Ovary (tissue), 10 donors: ENCODE measurements at regions of chr3 and their contacts with region 1.

Region 1: GRCh38 chr3:31768479-31769123 is 212.5 kb downstream of the OSBPL10 start:
- DNase-seq: peak; percentile 62 to 80 (median 65)
- H3K4me3 ChIP-seq: no peak overlapping the region
- H3K27ac ChIP-seq: no peak overlapping the region
- H3K4me1 ChIP-seq: peaks cover 3% of the 10 kb centered on the region
- H3K27me3 ChIP-seq: no peaks in the 10 kb centered on the region
- CTCF ChIP-seq: peak; percentile 52 to 62 (median 61)
- EP300 ChIP-seq: no peak
- POLR2A ChIP-seq: no peak

Region 2: GRCh38 chr3:30768703-30769685 is 999.6 kb before region 1 on chr3:
- intact Hi-C with region 1: loop called in 3 of 4 experiments (anchors 5 to 10 kb)
- DNase-seq: peak; percentile 40 to 78 (median 72)
- H3K4me3 ChIP-seq: no peak overlapping the region
- H3K27ac ChIP-seq: no peak overlapping the region
- H3K4me1 ChIP-seq: no peaks in the 10 kb centered on the region
- H3K27me3 ChIP-seq: no peaks in the 10 kb centered on the region
- CTCF ChIP-seq: peak; percentile 37 to 63 (median 56)
- EP300 ChIP-seq: no peak
- POLR2A ChIP-seq: no peak

Region 3: GRCh38 chr3:30779686-30780287 is 988.8 kb before region 1 on chr3:
- intact Hi-C with region 1: loop called in 2 of 4 experiments (anchors 5 to 10 kb)
- DNase-seq: no peak
- H3K4me3 ChIP-seq: no peak overlapping the region
- H3K27ac ChIP-seq: no peak overlapping the region
- H3K4me1 ChIP-seq: no peaks in the 10 kb centered on the region
- H3K27me3 ChIP-seq: no peaks in the 10 kb centered on the region
- CTCF ChIP-seq: no peak
- EP300 ChIP-seq: no peak
- POLR2A ChIP-seq: no peak

Region 4: DNA sequence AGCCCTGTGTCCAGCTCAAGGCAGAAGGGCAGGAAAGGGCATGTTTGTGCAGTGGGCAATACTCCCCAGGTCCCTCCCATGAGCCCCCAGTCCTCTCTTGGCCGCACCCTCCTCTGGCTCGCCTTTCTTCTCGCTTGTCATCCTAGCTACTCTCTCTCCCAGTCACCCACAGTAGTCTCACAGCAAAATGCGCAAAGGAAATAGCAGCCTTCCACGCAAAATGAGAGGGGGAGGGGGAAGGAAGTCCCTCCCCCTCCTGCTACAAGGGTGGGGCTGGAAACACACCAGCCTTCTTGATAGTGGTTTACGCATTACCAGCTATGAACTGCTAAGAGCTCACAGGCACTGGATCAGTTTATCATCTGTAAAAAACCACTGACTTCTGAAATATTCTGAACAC is 958.0 kb before region 1 on chr3:
- intact Hi-C with region 1: no loop called
- DNase-seq: no peak
- H3K4me3 ChIP-seq: no peak overlapping the region
- H3K27ac ChIP-seq: no peak overlapping the region
- H3K4me1 ChIP-seq: peaks cover 2% of the 10 kb centered on the region
- H3K27me3 ChIP-seq: no peaks in the 10 kb centered on the region
- CTCF ChIP-seq: no peak
- EP300 ChIP-seq: no peak
- POLR2A ChIP-seq: no peak

Region 5: GRCh38 chr3:30934208-30934550 is 834.4 kb before region 1 on chr3:
- intact Hi-C with region 1: loop called in 2 of 4 experiments (anchors 10 kb)
- DNase-seq: peak in 4 of 5 donors; percentile 18 to 36 (median 28)
- H3K4me3 ChIP-seq: no peak overlapping the region
- H3K27ac ChIP-seq: no peak overlapping the region
- H3K4me1 ChIP-seq: no peaks in the 10 kb centered on the region
- H3K27me3 ChIP-seq: no peaks in the 10 kb centered on the region
- CTCF ChIP-seq: peak; percentile 42 to 61 (median 55)
- EP300 ChIP-seq: no peak
- POLR2A ChIP-seq: no peak

Region 6: GRCh38 chr3:30948426-30948825 is 820.2 kb before region 1 on chr3:
- intact Hi-C with region 1: loop called in 1 of 4 experiments (anchors 10 kb)
- DNase-seq: no peak
- H3K4me3 ChIP-seq: no peak overlapping the region
- H3K27ac ChIP-seq: no peak overlapping the region
- H3K4me1 ChIP-seq: no peaks in the 10 kb centered on the region
- H3K27me3 ChIP-seq: no peaks in the 10 kb centered on the region
- CTCF ChIP-seq: no peak
- EP300 ChIP-seq: no peak
- POLR2A ChIP-seq: no peak